PC-3 (cell line): ENCODE measurements at regions of chr1 and their contacts with region 1.

Region 1: GRCh38 chr1:14498839-14499238 is 99.6 kb upstream of the KAZN start:
- DNase-seq: peak; percentile 60
- ATAC-seq: peak; percentile 67
- H3K4me3 ChIP-seq: no peak overlapping the region
- H3K27ac ChIP-seq: peak overlapping the region; percentile 64
- H3K4me1 ChIP-seq: peaks cover 23% of the 10 kb centered on the region
- H3K27me3 ChIP-seq: no peaks in the 10 kb centered on the region
- CTCF ChIP-seq: no peak

Region 2: DNA sequence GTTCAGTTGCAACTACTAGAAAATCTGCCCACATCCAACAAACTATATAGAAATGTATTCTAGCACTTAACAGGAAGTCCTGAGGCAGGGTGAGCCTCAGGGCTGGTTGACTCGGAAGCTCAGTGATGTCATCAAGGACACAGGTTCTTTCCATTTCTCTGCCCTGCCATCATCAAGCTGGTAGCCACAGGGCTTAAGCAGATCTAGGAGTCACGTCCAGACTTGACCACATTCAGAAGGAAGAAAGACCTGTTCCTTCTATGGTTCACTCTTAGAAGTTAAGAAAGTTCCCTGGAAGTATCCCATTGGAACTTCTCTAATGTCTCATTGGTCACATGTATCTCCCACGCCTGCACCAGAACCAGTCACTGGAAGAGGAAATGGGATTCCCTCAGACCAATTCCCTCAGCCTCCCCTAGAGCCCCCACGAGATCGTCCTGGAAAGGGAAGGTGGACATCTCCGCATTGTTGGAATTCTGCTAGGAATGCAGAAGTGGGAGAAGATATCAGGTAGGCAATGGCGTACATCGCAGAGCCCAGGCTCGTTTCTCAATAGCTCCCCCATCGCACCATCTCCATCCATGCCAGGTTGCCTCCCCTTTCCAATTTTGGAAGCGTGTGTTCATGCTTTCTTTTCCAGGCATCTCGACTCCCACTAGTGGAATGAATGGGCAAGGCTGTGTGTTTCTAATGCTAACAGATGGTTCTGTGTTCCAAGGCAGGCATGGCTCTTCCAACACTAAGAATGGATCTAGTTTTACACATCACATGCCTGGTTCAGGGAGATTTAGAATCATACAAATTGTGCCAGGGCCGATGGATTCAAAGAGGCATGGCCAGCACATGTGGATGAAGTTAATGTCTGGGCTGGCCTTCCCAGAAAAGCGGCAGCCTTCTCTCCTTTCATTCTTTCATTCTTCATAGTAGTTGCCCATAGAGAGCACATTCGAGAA is 360.4 kb before region 1 on chr1:
- CTCF ChIA-PET with region 1: no interaction called
- POLR2A ChIA-PET with region 1: no interaction called
- intact Hi-C with region 1: loop called (anchors 1 kb)
- DNase-seq: peak; percentile 83
- ATAC-seq: peak; percentile 60
- H3K4me3 ChIP-seq: no peak overlapping the region
- H3K27ac ChIP-seq: peak overlapping the region; percentile 72
- H3K4me1 ChIP-seq: peaks cover 29% of the 10 kb centered on the region
- H3K27me3 ChIP-seq: no peaks in the 10 kb centered on the region
- CTCF ChIP-seq: peak; percentile 25; the same call in 1 of the 2 replicates

Region 3: GRCh38 chr1:14516974-14517840 is 18.4 kb after region 1 on chr1:
- CTCF ChIA-PET with region 1: interaction called, 3 read pairs
- POLR2A ChIA-PET with region 1: interaction called, 4 read pairs
- intact Hi-C with region 1: loop called (anchors 1 kb)
- DNase-seq: peak; percentile 96
- ATAC-seq: peak; percentile 90
- H3K4me3 ChIP-seq: 0 out of 2 replicates have a peak overlapping the region, but pooled peaks have one; percentile 9
- H3K27ac ChIP-seq: peak overlapping the region; percentile 99
- H3K4me1 ChIP-seq: peaks cover 48% of the 10 kb centered on the region
- H3K27me3 ChIP-seq: no peaks in the 10 kb centered on the region
- CTCF ChIP-seq: no peak